PC-9 (cell line): ENCODE measurements at regions of chr13 and their contacts with region 1.

Region 1: GRCh38 chr13:78832461-78832860 is 173.5 kb upstream of the OBI1 start:
- DNase-seq: no peak
- H3K4me3 ChIP-seq: no peak overlapping the region
- H3K27ac ChIP-seq: no peak overlapping the region
- H3K4me1 ChIP-seq: no peaks in the 10 kb centered on the region
- H3K27me3 ChIP-seq: no peaks in the 10 kb centered on the region
- CTCF ChIP-seq: no peak

Region 2: DNA sequence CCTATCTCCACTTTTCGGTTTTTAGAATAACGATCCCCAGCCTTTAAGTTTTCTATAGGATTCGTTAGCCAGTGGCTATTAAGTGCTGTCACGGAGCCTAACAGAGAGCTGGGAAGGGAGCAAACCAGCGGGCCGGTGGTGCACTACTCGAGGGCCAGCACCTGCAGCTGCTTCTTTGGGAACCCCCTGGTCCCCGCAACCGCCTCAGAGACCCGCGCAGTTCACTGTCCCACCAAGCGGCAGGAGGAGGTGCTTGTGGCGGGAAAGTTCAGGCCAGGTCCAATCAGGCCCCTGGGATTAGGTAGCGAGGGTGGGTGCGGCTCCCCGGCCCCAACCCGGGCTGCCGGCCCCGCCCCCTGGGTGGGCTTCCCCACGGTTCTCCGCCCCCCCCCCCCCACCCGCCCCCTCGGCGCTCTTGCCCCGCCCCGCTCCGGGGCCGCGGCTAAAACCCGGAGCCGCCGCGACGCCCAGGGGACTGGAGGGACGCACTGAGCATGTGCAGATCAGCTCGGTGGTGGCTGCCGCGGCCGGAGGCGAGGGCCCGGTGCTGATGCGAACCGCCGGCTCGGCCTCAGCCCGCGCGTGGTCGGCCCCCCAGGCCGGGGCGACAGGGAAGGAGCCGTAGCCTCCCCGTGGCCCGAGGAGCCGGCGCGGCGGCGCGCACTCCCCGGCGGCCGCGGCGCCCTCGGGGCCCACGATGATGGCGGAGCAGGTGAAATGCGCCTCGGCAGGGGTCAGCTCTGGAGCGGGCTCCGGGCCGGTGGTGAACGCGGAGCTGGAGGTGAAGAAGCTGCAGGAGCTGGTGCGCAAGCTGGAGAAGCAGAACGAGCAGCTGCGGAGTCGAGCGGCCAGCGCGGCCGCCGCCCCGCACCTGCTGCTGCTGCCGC is 1135.0 kb before region 1 on chr13 and contains the start of gene SLAIN1:
- CTCF ChIA-PET with region 1: no interaction called
- POLR2A ChIA-PET with region 1: interaction called, 13 read pairs
- intact Hi-C with region 1: no loop called
- DNase-seq: peak in 1 of 2 experiments; percentile 65
- H3K4me3 ChIP-seq: peak within 1 kb of the TSS; percentile 65
- H3K27ac ChIP-seq: no peak within 1 kb of the TSS
- H3K4me1 ChIP-seq: peaks cover 17% of the 10 kb centered on the region
- H3K27me3 ChIP-seq: no peaks in the 10 kb centered on the region
- CTCF ChIP-seq: no peak
- total RNA-seq, gene SLAIN1: 2.3 and 2.4 TPM in 2 replicates

Region 3: DNA sequence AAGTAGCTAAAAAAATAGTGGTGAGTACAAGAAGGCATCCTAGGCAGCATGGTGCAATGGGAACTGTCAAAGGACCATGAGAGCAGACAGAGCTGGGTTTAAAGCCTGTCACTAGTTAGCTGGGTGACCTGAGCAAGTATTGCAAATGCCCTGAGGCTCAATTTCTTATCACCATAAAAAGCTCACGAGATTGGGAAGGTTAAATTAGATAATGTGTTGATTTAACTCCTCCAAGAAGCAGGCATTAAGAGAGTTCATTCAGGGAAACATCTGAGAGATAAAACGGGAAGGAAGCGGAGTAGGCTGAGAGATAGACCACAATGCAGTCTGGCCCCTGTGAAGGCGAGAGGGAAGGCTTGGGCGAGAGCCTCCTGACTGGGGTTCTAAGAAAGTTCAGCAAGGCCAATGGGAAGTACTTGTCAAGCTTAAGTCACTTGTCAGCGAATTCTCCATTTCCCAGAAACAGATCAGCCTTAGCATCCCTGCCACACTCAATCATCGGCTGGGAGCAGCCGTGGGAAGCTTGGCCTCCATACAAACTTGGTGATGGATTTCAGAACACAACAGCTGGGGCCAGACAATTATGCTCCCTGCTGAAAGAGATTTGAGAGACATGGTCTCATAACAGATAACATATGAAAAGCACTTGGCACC is 334.6 kb before region 1 on chr13:
- CTCF ChIA-PET with region 1: no interaction called
- POLR2A ChIA-PET with region 1: no interaction called
- intact Hi-C with region 1: no loop called
- DNase-seq: no peak
- H3K4me3 ChIP-seq: no peak overlapping the region
- H3K27ac ChIP-seq: no peak overlapping the region
- H3K4me1 ChIP-seq: no peaks in the 10 kb centered on the region
- H3K27me3 ChIP-seq: no peaks in the 10 kb centered on the region
- CTCF ChIP-seq: no peak

Region 4: GRCh38 chr13:78913656-78914055 is 81.2 kb after region 1 on chr13:
- CTCF ChIA-PET with region 1: no interaction called
- POLR2A ChIA-PET with region 1: no interaction called
- intact Hi-C with region 1: no loop called
- DNase-seq: no peak
- H3K4me3 ChIP-seq: no peak overlapping the region
- H3K27ac ChIP-seq: no peak overlapping the region
- H3K4me1 ChIP-seq: no peaks in the 10 kb centered on the region
- H3K27me3 ChIP-seq: no peaks in the 10 kb centered on the region
- CTCF ChIP-seq: no peak